ENCODE measurements at regions of chr6 and their contacts with region 1.

Region 1: DNA sequence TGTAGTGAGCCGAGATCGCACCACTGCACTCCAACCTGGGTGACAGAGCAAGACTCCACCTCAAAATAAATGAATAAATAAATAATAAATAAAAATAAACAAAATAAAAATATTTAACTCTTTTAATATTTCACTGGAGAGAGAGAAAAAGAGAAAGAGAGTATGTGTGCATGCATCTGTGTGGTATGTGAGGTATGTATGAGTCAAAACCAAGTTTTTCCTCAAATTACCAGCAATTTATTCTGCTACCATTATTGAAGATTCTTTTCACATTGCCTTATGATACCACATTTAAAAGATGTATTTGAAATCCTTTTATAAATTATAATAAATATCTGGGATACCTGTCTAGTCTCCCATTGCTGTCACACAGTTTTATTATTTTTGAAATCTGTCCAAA is 122.1 kb downstream of the CD164 start:
- DNase-seq: no peak
- H3K4me3 ChIP-seq: no peak overlapping the region
- H3K27ac ChIP-seq: no peak overlapping the region
- H3K4me1 ChIP-seq: no peaks in the 10 kb centered on the region
- H3K27me3 ChIP-seq: peaks cover 0 to 3% of the 10 kb centered on the region in 2 experiments
- CTCF ChIP-seq: no peak
- POLR2A ChIP-seq: no peak

Region 2: GRCh38 chr6:109202409-109203284 is 57.5 kb before region 1 on chr6:
- CTCF ChIA-PET with region 1: no interaction called
- POLR2A ChIA-PET with region 1: no interaction called
- dilution Hi-C with region 1: no loop called
- intact Hi-C with region 1: loop called (anchors 10 kb)
- DNase-seq: no peak
- H3K4me3 ChIP-seq: no peak overlapping the region
- H3K27ac ChIP-seq: no peak overlapping the region
- H3K4me1 ChIP-seq: no peaks in the 10 kb centered on the region
- H3K27me3 ChIP-seq: peaks cover 2 to 6% of the 10 kb centered on the region in 2 experiments
- CTCF ChIP-seq: no peak
- POLR2A ChIP-seq: no peak

Region 3: DNA sequence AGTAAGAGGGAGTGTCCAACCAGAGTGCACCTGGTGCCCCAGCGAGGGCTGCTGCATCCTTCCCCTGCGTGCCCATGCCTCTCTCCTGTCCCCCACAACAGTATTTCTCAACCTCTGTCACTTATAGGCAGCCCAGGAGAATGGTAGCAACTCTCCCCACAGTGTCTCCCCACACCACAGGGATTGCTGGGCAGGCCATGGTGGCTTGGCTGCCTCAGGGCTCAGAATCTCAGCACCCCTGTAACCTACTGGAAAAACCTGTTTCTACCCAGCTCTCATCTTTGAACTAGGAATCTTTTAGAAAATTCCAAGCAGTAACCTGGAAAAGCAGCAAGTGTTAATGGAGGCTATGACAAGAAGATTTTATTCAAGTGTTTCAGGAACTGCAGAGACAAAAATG is 84.1 kb after region 1 on chr6:
- CTCF ChIA-PET with region 1: no interaction called
- POLR2A ChIA-PET with region 1: no interaction called
- dilution Hi-C with region 1: no loop called
- intact Hi-C with region 1: no loop called
- DNase-seq: no peak
- H3K4me3 ChIP-seq: no peak overlapping the region
- H3K27ac ChIP-seq: no peak overlapping the region
- H3K4me1 ChIP-seq: no peaks in the 10 kb centered on the region
- H3K27me3 ChIP-seq: no peaks in the 10 kb centered on the region
- CTCF ChIP-seq: no peak
- POLR2A ChIP-seq: no peak

Region 4: DNA sequence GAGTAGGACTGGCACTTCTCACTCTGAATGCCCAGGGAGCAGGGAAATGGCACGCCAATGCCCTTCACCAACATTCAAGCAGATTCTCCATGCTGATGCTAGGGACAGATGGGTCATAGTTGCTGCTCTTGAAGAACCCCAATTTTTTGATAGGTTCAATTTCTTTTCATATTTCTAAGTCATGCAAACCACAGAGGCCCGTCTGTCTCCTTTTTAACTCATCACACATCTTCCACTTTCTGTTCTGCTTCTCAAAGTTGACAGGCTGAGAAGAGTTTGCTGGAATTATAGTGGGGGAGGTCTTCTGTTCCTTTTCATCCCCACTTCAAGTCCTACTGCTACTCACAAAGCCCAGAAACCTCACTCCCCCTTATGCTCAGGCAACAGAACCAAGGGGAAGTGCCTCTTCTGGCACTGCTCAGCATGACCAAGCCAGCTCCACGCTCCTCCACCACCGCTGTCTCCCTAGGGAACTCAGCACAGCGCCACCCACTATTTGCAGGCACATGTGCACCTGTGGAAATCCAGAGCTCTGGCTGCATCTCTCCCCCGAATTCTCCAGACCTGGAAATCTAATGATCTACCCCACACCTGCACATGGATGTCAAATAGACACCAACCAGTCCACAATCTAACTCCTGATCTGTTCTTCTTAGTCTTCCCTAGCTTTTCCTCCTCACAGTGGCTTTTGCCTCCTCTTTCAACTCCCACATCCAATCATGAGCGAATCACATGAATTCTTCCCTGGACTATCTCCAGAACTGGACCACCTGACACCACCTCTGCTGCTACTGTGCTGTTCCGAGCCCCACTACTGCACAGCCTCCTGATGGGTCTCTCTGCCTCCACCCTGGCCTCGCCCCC is 212.2 kb after region 1 on chr6:
- CTCF ChIA-PET with region 1: no interaction called
- POLR2A ChIA-PET with region 1: no interaction called
- dilution Hi-C with region 1: no loop called
- intact Hi-C with region 1: no loop called
- DNase-seq: no peak
- H3K4me3 ChIP-seq: no peak overlapping the region
- H3K27ac ChIP-seq: no peak overlapping the region
- H3K4me1 ChIP-seq: no peaks in the 10 kb centered on the region
- H3K27me3 ChIP-seq: no peaks in the 10 kb centered on the region
- CTCF ChIP-seq: no peak
- POLR2A ChIP-seq: no peak

Region 5: GRCh38 chr6:110566346-110567125 is 1306.4 kb after region 1 on chr6:
- CTCF ChIA-PET with region 1: no interaction called
- POLR2A ChIA-PET with region 1: no interaction called
- dilution Hi-C with region 1: no loop called
- intact Hi-C with region 1: no loop called
- DNase-seq: no peak
- H3K4me3 ChIP-seq: no peak overlapping the region
- H3K27ac ChIP-seq: no peak overlapping the region
- H3K4me1 ChIP-seq: no peaks in the 10 kb centered on the region
- H3K27me3 ChIP-seq: peaks cover 20 to 22% of the 10 kb centered on the region in 2 experiments
- CTCF ChIP-seq: no peak
- POLR2A ChIP-seq: no peak

Measured in endothelial cell of umbilical vein (primary cell).